ENCODE measurements at regions of chr5 and their contacts with region 1.

Region 1: DNA sequence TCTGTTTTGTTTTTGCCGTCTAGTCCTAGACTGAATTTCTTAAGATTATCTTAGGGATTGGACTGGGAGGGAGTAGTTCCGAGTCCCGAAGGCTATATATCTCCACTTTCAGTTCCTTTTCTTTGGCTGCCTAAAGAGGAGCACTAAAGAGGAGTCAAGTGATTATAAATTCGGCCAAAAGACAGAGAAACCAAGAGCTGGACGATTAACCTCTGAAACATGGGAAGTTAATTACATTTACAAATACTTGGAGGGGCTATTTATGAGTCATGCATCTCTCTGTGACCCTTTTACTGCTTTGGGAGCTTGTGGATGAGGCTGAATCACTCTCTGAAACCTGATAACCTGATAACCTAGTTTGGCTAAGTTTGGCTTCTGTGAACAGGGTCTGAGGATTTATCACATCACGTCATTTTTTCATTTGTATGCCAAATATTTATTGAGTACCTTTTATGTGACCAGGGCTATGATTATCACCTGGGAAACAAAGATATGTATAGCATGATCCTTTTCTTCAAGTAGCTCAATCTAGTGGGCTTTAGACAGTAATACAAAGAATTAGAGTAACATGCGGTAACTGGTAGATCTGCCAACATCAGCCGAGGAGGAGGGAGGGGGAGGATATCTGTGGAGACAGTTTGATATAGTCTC is 180.9 kb downstream of the CD180 start:
- DNase-seq: no peak
- H3K4me3 ChIP-seq: peak overlapping the region; percentile 30 to 61 (median 39)
- H3K27ac ChIP-seq: peak overlapping the region; percentile 84 to 87
- H3K4me1 ChIP-seq: no peaks in the 10 kb centered on the region
- H3K27me3 ChIP-seq: no peaks in the 10 kb centered on the region
- CTCF ChIP-seq: no peak
- POLR2A ChIP-seq: no peak

Region 2: DNA sequence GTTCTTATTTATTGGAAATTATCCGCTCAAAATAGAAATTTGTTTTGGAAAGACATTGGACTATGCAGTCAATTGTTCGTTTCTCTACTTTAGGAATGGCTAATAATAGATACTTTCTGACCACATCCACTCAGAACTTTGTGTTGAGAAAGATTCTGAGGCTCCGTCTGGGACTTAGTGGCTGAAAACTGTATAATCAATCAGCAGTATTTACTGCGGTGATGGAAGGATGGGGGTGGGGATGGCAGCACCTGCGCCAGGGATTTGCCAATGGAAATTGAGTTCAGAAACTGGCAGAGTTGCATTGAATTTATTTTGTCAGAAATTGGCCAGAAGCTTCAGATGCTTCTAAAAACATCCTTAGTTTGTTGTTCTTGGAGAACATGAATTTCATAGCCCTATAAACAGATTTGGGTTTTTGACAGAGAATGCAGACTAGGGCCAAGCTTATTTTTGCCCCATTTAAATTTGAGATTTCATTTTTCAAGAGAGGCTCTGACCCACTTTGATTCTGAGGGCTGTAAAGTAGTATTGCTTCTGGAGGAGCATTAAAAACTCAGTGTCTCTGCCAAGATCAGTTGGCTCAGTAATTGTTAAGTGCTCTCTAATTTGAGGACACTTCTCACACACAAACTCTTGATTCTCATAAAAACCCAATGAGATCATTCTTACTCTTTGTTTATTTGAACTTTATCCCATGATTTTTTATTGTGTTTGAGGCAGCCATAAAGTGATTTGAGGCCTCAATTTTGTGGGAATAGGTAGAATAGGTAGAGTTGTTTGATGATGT is 34.2 kb before region 1 on chr5:
- intact Hi-C with region 1: no loop called
- DNase-seq: no peak
- H3K4me3 ChIP-seq: no peak overlapping the region
- H3K27ac ChIP-seq: no peak overlapping the region
- H3K4me1 ChIP-seq: no peaks in the 10 kb centered on the region
- H3K27me3 ChIP-seq: no peaks in the 10 kb centered on the region
- CTCF ChIP-seq: no peak
- POLR2A ChIP-seq: no peak

Region 3: GRCh38 chr5:67032921-67033664 is 17.4 kb after region 1 on chr5:
- intact Hi-C with region 1: no loop called
- DNase-seq: no peak
- H3K4me3 ChIP-seq: no peak overlapping the region
- H3K27ac ChIP-seq: no peak overlapping the region
- H3K4me1 ChIP-seq: no peaks in the 10 kb centered on the region
- H3K27me3 ChIP-seq: no peaks in the 10 kb centered on the region
- CTCF ChIP-seq: no peak
- POLR2A ChIP-seq: no peak

Region 4: GRCh38 chr5:68657048-68657961 is 1641.6 kb after region 1 on chr5:
- intact Hi-C with region 1: loop called (anchors 5 kb)
- DNase-seq: no peak
- H3K4me3 ChIP-seq: no peak overlapping the region
- H3K27ac ChIP-seq: no peak overlapping the region
- H3K4me1 ChIP-seq: peaks cover 0 to 4% of the 10 kb centered on the region in 2 donors
- H3K27me3 ChIP-seq: no peaks in the 10 kb centered on the region
- CTCF ChIP-seq: no peak
- POLR2A ChIP-seq: no peak